Endothelial cell of umbilical vein (primary cell): ENCODE measurements at regions of chr10 and their contacts with region 1.

Region 1: GRCh38 chr10:35961501-35961900 is 319.4 kb upstream of the FZD8 start:
- DNase-seq: no peak
- H3K4me3 ChIP-seq: no peak overlapping the region
- H3K27ac ChIP-seq: no peak overlapping the region
- H3K4me1 ChIP-seq: peaks cover 3% of the 10 kb centered on the region
- H3K27me3 ChIP-seq: no peaks in the 10 kb centered on the region
- CTCF ChIP-seq: no peak
- POLR2A ChIP-seq: no peak

Region 2: GRCh38 chr10:37403776-37404175 is 1442.3 kb after region 1 on chr10:
- CTCF ChIA-PET with region 1: no interaction called
- POLR2A ChIA-PET with region 1: no interaction called
- dilution Hi-C with region 1: no loop called
- intact Hi-C with region 1: loop called (anchors 10 kb)
- DNase-seq: no peak
- H3K4me3 ChIP-seq: no peak overlapping the region
- H3K27ac ChIP-seq: no peak overlapping the region
- H3K4me1 ChIP-seq: no peaks in the 10 kb centered on the region
- H3K27me3 ChIP-seq: no peaks in the 10 kb centered on the region
- CTCF ChIP-seq: no peak
- POLR2A ChIP-seq: no peak